Activated naive CD8-positive, alpha-beta T cell treated with anti-CD3 and anti-CD28 coated beads, Interleukin-2, amount 10 ng/mL, durations not matched to agents 7 days and 5 days (primary cell): ENCODE measurements at regions of chr22 and their contacts with region 1.

Region 1: DNA sequence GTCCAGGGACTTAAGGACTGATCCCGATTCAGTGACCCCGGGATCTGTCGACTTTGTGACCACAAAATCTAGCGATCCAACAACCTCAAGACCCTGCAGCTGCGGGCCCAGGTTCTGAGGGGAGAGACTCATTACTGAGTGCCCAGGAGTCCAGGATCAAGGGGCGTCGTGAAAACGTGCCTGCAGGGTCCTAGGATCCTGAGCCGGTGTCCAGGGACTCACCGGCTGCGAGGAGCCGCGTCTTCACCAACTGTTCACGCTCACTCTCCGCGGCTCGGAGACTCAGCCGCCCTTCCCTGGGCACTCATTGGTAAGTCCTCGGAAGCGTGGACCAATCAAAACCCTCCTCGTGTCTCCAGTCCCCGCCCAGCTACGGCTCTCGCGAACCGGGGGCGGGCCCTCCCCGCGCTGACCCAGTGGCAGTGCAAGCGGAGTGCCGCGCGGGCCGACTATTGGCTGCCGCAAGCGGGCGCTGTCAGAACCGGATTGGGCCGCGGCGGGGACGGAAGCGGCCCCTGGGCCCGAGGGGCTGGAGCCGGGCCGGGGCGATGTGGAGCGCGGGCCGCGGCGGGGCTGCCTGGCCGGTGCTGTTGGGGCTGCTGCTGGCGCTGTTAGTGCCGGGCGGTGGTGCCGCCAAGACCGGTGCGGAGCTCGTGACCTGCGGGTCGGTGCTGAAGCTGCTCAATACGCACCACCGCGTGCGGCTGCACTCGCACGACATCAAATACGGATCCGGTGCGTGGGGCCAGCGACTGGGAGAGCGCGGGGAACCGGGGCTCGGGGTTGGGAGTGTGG is at the start of gene SDF2L1:
- DNase-seq: peak; percentile 98
- ATAC-seq: peak; percentile 99
- H3K4me3 Mint-ChIP-seq: peak within 1 kb of the TSS; percentile 93
- H3K27ac Mint-ChIP-seq: peak within 1 kb of the TSS; percentile 86
- H3K4me1 Mint-ChIP-seq: peaks cover 27% of the 10 kb centered on the region
- H3K27me3 Mint-ChIP-seq: no peaks in the 10 kb centered on the region
- total RNA-seq, gene SDF2L1: 36.0 to 39.7 TPM

Region 2: DNA sequence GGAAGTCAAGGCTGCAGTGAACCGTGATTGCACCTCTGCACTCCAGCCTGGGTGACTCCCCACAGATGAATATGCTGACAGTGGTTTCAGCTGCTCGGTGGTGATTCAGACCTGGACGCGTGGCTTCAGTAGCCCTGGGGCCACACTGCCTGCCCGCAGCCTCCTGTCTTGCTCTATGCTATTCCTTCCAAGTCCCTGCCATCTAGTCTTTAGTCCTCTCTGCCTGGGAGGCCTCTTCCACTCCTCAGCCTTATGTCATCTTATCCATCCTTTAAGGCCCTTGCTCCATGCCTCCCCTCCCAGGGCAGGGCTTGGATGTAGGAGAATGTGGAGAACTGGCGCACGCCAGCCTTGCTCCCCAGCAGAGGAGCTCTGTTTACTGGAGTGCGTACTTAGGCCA is 35.2 kb before region 1 on chr22:
- POLR2A ChIA-PET with region 1: no interaction called
- DNase-seq: no peak
- ATAC-seq: no peak
- H3K4me3 Mint-ChIP-seq: no peak overlapping the region
- H3K27ac Mint-ChIP-seq: no peak overlapping the region
- H3K4me1 Mint-ChIP-seq: peaks cover 12% of the 10 kb centered on the region
- H3K27me3 Mint-ChIP-seq: no peaks in the 10 kb centered on the region

Region 3: DNA sequence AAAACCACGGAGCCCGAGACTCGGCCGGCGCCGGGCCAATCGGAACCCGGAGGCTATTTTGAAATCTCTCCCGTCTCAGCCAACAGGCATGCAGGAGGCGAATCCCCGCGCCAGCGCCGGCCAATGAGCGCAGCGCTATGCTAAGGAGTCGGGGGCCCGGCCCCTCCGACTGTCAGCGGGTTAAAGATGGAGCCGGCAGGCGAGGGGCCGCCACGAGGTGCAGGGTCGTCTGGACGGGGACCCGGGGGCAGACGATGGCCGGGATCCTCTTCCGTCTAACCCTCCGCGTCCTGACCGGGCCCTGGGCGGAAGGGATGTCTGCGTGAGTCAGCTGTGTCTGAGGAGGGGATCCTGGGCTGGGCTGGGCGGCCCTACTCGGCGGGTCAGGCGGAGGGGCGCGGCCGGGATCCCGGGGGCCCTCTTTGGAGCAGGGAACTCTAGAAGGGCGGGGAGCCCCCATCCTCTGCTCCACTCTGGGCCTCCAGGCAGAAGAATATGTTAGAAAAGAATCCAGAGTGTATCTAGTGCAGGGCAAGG is 10.1 kb after region 1 on chr22:
- POLR2A ChIA-PET with region 1: interaction called, 41 read pairs
- DNase-seq: peak; percentile 89
- ATAC-seq: peak; percentile 98
- H3K4me3 Mint-ChIP-seq: peak overlapping the region; percentile 83
- H3K27ac Mint-ChIP-seq: peak overlapping the region; percentile 88
- H3K4me1 Mint-ChIP-seq: peaks cover 24% of the 10 kb centered on the region
- H3K27me3 Mint-ChIP-seq: no peaks in the 10 kb centered on the region

Region 4: DNA sequence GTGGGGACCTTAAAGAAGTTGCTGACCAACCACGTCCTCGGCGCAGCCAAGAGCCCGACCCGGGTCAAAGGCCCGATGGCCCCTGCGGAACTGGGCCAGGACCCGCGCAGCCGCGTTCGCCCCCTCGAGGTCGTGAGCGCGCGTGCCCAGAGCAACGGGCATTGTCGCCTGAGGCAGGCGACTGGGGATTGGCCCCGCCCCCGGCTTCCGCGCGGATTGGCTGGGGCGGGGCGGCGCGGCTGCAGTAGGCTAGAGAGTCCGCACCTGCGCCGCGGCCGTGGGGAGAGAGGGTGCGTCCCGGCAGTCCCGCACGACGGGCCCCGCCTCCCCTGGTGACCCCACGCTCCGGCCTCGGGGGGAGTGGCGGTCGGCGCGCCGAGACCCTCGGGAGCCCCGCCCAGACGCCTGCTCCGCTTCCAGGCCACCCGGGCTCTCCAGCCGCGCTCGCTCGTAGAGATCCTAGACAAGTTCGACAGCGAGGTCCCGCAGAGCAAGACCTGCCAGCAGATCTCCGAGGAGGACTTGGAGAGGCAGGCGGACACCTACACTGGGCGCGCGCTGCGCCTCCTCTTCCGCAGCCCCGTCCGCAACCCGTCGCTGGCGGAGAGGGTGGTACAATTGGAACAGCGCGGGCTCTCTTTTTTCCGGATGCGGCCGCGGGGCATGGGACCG is 15.5 kb after region 1 on chr22:
- POLR2A ChIA-PET with region 1: interaction called, 41 read pairs
- DNase-seq: peak; percentile 92
- ATAC-seq: peak; percentile 90
- H3K4me3 Mint-ChIP-seq: peak overlapping the region; percentile 92
- H3K27ac Mint-ChIP-seq: peak overlapping the region; percentile 88
- H3K4me1 Mint-ChIP-seq: peaks cover 18% of the 10 kb centered on the region
- H3K27me3 Mint-ChIP-seq: no peaks in the 10 kb centered on the region